Activated CD8-positive, alpha-beta T cell treated with anti-CD3 and anti-CD28 coated beads, Interleukin-2, amount 10 ng/mL, durations not matched to agents 7 days and 5 days (primary cell): ENCODE measurements at regions of chr3 and their contacts with region 1.

Region 1: DNA sequence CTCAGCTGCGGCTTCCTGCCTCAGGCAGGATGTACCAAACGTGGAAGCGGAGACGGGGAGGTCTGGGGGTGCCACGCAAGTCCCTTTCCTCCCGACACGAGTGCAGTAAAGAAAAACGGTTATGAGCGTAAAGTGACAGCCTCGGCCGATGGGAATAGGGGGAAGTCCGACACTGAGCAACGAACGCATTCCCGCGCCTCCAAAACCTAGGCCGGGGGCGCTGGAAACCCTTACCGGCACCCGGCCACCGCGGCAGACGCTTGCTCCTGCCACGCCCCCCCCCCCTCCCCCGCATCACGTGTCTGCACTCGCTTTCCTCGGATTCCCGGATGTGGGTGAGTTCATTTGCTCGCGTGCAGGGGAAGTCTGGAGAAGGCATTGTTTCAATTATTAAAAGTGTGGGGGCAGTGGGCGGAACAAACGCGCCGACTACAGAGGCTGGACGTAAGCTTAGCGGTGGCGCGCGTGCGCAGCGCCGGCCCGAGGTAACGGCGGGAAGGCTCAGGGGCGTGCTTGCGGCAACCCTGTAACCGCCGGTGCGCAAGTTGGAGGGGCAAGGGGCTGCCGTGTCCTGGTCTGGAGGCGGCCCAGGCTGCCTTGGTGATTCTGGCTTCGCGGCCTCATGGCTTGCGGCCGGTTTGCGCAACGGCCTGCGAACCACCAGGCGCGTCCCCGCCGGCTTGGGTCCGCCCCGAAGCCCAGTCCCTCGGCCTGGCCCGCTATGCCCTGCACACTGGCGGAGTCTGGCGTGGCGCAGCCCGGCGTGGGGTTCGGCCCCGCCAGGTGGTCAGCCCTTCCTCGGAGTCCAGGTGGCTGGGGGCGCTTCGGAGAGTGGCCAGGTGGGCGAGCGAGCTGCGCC is at the starts of genes ANAPC13 and CEP63:
- DNase-seq: peak; percentile 97
- ATAC-seq: peak; percentile 89
- H3K4me3 Mint-ChIP-seq: peak within 1 kb of the TSS; percentile 86
- H3K27ac Mint-ChIP-seq: peak within 1 kb of the TSS; percentile 96
- H3K4me1 Mint-ChIP-seq: peaks cover 39% of the 10 kb centered on the region
- H3K27me3 Mint-ChIP-seq: no peaks in the 10 kb centered on the region
- total RNA-seq, gene ANAPC13: 24.9 to 25.3 TPM
- total RNA-seq, gene CEP63: 26.5 to 27.7 TPM

Region 2: GRCh38 chr3:134457376-134458074 is 28.4 kb before region 1 on chr3:
- CTCF ChIA-PET with region 1: no interaction called
- POLR2A ChIA-PET with region 1: no interaction called
- DNase-seq: no peak
- ATAC-seq: no peak
- H3K4me3 Mint-ChIP-seq: no peak overlapping the region
- H3K27ac Mint-ChIP-seq: no peak overlapping the region
- H3K4me1 Mint-ChIP-seq: no peaks in the 10 kb centered on the region
- H3K27me3 Mint-ChIP-seq: peaks cover 21% of the 10 kb centered on the region

Region 3: GRCh38 chr3:134496471-134497071 is 10.6 kb after region 1 on chr3:
- CTCF ChIA-PET with region 1: interaction called, 3 read pairs
- POLR2A ChIA-PET with region 1: interaction called, 10 read pairs
- DNase-seq: no peak
- ATAC-seq: no peak
- H3K4me3 Mint-ChIP-seq: no peak overlapping the region
- H3K27ac Mint-ChIP-seq: no peak overlapping the region
- H3K4me1 Mint-ChIP-seq: peaks cover 32% of the 10 kb centered on the region
- H3K27me3 Mint-ChIP-seq: no peaks in the 10 kb centered on the region